Transverse colon (tissue), 4 donors: ENCODE measurements at regions of chr1 and their contacts with region 1.

Region 1: GRCh38 chr1:156096640-156097391 is 14.6 kb upstream of the MEX3A start:
- DNase-seq: peak; percentile 93
- H3K4me3 ChIP-seq: no peak overlapping the region
- H3K27ac ChIP-seq: peak overlapping the region; percentile 57 to 80 (median 77)
- H3K4me1 ChIP-seq: peaks cover 8 to 46% (median 20%) of the 10 kb centered on the region in 4 donors
- H3K27me3 ChIP-seq: no peaks in the 10 kb centered on the region
- CTCF ChIP-seq: peak; percentile 93 to 97 (median 94)
- EP300 ChIP-seq: no peak
- POLR2A ChIP-seq: no peak

Region 2: DNA sequence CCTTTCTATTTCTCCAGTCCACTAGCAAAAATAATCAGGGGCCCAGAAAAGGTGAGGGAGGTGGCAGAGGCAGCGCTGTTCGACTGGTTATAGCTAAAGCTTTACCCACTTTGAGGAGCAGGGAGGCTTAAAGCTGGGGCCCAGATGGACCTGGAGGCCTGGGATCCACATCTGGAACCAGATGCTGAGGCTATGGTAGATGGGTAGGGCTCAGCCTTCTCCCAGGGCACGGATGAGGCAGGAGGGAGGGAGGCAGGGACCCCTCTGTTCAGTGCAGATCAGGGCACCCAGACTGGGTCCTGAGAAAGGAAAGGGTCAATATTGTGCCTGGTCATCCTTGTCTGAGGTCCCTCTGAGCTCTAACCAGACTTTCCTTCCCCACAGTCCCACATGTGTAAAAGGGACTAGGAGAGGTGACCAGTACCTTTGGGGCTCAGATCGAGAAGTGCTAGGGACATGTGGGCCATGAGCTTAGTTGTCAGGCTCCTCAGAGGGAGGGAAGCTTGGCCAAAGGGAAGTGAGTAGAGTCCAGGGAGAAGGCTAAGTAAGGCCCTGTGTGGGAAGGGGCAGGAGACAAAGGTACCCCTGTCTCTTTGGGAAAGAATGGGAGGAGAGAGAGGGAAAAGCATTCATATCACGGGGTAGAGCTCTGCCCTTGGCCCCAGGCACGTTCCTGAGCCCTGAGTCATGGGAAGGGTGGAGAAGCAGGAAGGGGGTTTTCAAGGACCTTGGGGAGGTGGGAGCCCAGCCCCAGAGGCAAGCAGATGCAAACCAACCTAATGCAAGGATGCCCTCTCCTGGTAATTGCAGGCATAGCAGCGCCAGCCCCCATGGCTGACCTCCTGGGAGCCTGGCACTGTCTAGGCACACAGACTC is 33.1 kb after region 1 on chr1:
- in situ Hi-C with region 1: loop called in 2 of 4 experiments (anchors 5 kb)
- intact Hi-C with region 1: loop called (anchors 2 kb)
- DNase-seq: peak; percentile 88
- H3K4me3 ChIP-seq: peak overlapping the region in 1 of 4 donors; percentile 18
- H3K27ac ChIP-seq: peak overlapping the region; percentile 96 to 100 (median 98)
- H3K4me1 ChIP-seq: peaks cover 50 to 58% (median 56%) of the 10 kb centered on the region in 4 donors
- H3K27me3 ChIP-seq: no peaks in the 10 kb centered on the region
- CTCF ChIP-seq: peak; percentile 95 to 99 (median 97)
- EP300 ChIP-seq: no peak
- POLR2A ChIP-seq: peak; percentile 31

Region 3: GRCh38 chr1:156172696-156173470 is 76.1 kb after region 1 on chr1:
- in situ Hi-C with region 1: no loop called
- intact Hi-C with region 1: loop called (anchors 2 kb)
- DNase-seq: no peak
- H3K4me3 ChIP-seq: no peak overlapping the region
- H3K27ac ChIP-seq: no peak overlapping the region
- H3K4me1 ChIP-seq: no peaks in the 10 kb centered on the region
- H3K27me3 ChIP-seq: no peaks in the 10 kb centered on the region
- CTCF ChIP-seq: no peak
- EP300 ChIP-seq: no peak
- POLR2A ChIP-seq: no peak

Region 4: GRCh38 chr1:156212833-156213643 is 116.2 kb after region 1 on chr1 and contains the start of gene PMF1:
- in situ Hi-C with region 1: loop called in 1 of 4 experiments (anchors 25 kb)
- intact Hi-C with region 1: no loop called
- DNase-seq: peak; percentile 97
- H3K4me3 ChIP-seq: peak within 1 kb of the TSS; percentile 41 to 73 (median 69)
- H3K27ac ChIP-seq: peak within 1 kb of the TSS; percentile 88 to 96 (median 94)
- H3K4me1 ChIP-seq: peaks cover 15 to 30% (median 22%) of the 10 kb centered on the region in 4 donors
- H3K27me3 ChIP-seq: no peaks in the 10 kb centered on the region
- CTCF ChIP-seq: no peak
- EP300 ChIP-seq: peak; percentile 29
- POLR2A ChIP-seq: peak; percentile 77
- total RNA-seq, gene PMF1: 29.9 to 67.3 (median 52.3) TPM